Prostate gland (tissue), 2 donors: ENCODE measurements at regions of chr9 and their contacts with region 1.

Region 1: GRCh38 chr9:75265525-75265972 is 177.2 kb downstream of the OSTF1 start:
- DNase-seq: peak; percentile 15
- H3K4me3 ChIP-seq: no peak overlapping the region
- H3K27ac ChIP-seq: no peak overlapping the region
- H3K4me1 ChIP-seq: no peaks in the 10 kb centered on the region
- H3K27me3 ChIP-seq: no peaks in the 10 kb centered on the region
- CTCF ChIP-seq: peak; percentile 60 to 88 (median 74)
- POLR2A ChIP-seq: no peak

Region 2: GRCh38 chr9:74952281-74953151 is 313.0 kb before region 1 on chr9 and contains the start of gene C9orf40:
- intact Hi-C with region 1: no loop called
- DNase-seq: peak; percentile 84
- H3K4me3 ChIP-seq: peak within 1 kb of the TSS; percentile 75 to 91
- H3K27ac ChIP-seq: peak within 1 kb of the TSS; percentile 91 to 94
- H3K4me1 ChIP-seq: no peaks in the 10 kb centered on the region
- H3K27me3 ChIP-seq: no peaks in the 10 kb centered on the region
- CTCF ChIP-seq: peak; percentile 49 to 86 (median 76)
- POLR2A ChIP-seq: peak; percentile 4
- total RNA-seq, gene C9orf40: 2.5 to 4.4 TPM

Region 3: DNA sequence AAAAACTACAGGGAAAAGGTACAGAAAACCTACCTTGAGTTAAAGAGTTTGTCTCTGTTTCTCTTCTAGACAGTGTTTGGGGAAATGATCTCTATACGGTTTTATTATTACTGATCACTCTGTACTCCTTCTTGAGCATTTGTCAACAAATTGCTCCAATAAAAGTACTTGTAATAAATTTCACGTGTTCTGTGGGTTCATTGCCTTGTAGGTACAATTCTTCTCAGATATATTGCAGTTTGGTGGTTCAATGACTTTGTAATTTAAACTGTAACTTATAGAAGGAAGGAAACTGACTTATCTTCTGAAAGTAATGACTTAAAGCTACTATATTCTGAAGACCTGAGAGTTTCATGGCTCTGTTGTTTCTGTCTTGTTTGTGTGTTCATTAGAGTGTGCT is 305.0 kb after region 1 on chr9:
- intact Hi-C with region 1: no loop called
- DNase-seq: no peak
- H3K4me3 ChIP-seq: no peak overlapping the region
- H3K27ac ChIP-seq: no peak overlapping the region
- H3K4me1 ChIP-seq: no peaks in the 10 kb centered on the region
- H3K27me3 ChIP-seq: no peaks in the 10 kb centered on the region
- CTCF ChIP-seq: no peak
- POLR2A ChIP-seq: no peak

Region 4: DNA sequence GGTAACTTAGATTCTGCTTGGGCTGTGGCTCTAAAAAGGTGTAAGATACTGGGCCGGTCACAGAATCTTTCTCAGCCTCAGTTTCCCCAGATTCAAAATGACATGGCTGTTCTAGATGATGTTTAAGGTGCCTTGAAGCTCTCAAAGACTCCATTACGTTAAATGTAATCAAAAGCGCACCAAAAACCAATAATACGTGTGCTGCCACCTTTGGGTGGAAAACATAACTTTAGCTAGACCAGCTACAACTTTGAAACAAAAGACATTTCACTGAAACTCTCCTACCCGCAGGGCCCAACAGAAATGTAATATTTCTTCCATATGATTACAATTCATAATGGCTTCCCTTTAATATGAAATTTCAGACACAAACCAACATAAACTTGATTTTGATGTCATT is 590.0 kb after region 1 on chr9:
- intact Hi-C with region 1: loop called (anchors 5 kb)
- DNase-seq: no peak
- H3K4me3 ChIP-seq: no peak overlapping the region
- H3K27ac ChIP-seq: no peak overlapping the region
- H3K4me1 ChIP-seq: no peaks in the 10 kb centered on the region
- H3K27me3 ChIP-seq: no peaks in the 10 kb centered on the region
- CTCF ChIP-seq: no peak
- POLR2A ChIP-seq: no peak